ENCODE measurements at regions of chr9 and their contacts with region 1.

Region 1: DNA sequence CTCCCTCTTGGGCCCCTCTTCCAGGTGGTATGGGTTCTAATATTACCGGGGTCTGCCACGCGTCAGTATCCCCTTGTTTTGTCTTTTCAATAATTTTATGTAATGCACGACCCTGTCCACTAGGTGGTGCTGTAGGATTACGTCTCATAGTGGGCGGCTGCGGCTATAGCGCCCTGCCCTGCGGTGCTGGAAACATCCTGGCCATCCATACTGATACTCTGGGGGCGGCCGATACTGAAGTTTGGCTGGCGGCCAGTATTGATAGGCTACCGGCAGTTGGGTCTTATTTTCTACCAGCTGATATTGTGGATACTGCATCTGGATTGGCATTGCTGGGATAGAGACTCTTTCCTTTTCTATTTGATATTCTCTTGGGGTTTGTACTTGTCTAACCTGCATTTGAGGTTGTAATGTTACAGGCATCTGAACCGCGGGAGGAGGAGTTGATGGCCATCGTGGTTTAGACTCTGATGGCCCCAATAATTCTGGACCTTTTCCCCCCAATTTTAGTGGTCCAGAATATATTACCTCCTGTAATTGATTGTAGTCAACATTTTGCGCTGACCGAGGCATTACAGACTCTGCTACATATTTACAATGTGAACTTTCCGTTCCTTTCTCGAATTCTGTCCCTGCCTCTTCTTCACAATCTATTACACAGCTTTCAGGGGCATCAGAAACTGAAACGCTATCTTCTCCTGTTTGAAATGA is 3.3 kb upstream of the TMEM141 start:
- DNase-seq: peak in 3 of 4 donors; percentile 65 to 86 (median 77)
- ATAC-seq: no peak
- H3K4me3 ChIP-seq: no peak overlapping the region
- H3K27ac ChIP-seq: no peak overlapping the region
- H3K4me1 ChIP-seq: peaks cover 8 to 33% of the 10 kb centered on the region in 2 donors
- H3K27me3 ChIP-seq: no peaks in the 10 kb centered on the region
- CTCF ChIP-seq: peak; percentile 76 to 83

Region 2: DNA sequence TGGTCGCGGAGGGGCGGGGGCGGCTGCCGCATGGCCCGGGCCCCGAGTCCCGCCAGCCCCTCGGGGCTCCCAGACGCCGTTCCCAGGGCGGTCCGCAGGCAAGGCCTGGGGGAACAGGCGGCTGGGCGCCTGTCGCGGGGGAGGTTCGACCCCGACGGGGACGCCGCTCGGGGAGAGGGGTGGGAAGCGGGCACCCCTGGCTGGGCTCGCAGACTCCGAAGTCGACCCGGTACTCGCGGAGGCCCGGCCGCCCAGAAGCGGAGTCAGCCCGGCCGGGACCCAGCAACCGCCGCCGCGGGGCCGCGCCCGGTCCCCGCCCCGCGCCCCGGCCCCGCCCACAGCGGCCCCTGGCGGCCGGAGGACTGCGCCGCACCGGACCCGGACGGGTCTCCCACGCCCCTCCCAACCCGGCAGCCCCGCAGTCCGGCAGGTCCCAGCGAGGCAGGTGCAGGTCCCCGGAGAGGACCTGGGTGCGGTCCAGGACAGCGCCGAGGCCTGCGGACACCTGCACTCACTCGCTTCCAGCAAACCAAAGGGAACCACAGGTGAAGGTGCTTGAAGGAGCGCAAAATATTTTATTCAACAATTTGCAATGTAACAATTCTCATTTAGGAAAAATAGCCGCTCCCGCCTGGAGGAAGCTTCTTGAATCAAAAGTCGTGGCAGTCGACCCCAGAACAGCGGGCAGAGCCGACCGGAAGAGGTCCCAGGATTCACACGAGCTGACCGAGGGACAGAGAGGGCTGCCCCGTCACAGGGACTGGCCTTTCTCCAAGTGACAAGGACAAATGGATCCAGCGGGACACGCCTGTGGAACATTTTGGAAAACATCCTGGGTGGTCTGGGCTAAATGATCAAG is 348.1 kb before region 1 on chr9 and contains the start of gene INPP5E:
- intact Hi-C with region 1: no loop called
- DNase-seq: peak; percentile 64 to 96 (median 72)
- ATAC-seq: peak; percentile 91
- H3K4me3 ChIP-seq: peak within 1 kb of the TSS; percentile 91 to 92
- H3K27ac ChIP-seq: peak within 1 kb of the TSS in 1 of 2 donors; percentile 75
- H3K4me1 ChIP-seq: peaks cover 13 to 41% of the 10 kb centered on the region in 2 donors
- H3K27me3 ChIP-seq: peaks cover 0 to 11% of the 10 kb centered on the region in 2 donors
- CTCF ChIP-seq: peak; percentile 50 to 77
- polyA plus RNA-seq, gene INPP5E: 11.4 to 19.8 (median 14.3) TPM

Region 3: DNA sequence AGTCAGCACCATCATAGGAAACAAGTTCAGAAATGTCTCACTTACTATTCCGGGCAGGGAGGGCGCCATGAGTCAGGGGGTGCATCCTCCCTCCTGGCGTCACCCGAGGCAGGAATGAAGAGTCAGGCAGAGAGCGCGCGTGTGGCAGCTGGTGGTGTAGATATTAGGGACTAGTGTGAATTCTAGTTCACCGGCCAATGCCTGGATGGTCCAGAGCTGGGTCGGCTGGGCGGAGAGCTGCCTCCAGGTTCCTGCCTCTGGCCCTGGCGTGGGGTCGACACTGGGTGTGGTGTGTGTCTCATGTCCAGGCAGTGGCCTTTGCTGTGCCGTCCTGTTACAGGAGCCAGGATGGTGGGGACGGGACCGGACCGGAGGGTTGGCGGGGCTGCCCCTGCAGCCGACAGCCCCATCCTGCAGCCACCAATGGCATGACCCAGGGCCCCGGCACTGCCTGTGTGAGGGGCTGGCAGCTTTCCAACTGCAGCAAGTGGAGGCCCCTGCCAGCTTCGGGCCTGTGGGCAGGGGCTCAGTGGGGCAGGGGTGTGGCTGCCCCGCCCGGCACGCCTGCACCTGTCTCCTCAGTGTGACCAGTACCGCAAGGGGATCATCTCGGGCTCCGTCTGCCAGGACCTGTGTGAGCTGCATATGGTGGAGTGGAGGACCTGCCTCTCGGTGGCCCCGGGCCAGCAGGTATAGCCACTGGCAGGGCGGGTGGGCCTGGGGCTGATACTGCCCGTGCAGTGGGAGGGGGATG is 66.3 kb before region 1 on chr9:
- intact Hi-C with region 1: no loop called
- DNase-seq: peak in 1 of 4 donors; percentile 74
- ATAC-seq: no peak
- H3K4me3 ChIP-seq: no peak overlapping the region
- H3K27ac ChIP-seq: peak overlapping the region in 1 of 2 donors; percentile 64
- H3K4me1 ChIP-seq: peaks cover 17 to 82% of the 10 kb centered on the region in 2 donors
- H3K27me3 ChIP-seq: peaks cover 0 to 11% of the 10 kb centered on the region in 2 donors
- CTCF ChIP-seq: no peak

Region 4: GRCh38 chr9:137067860-137068538 is 280.2 kb after region 1 on chr9:
- intact Hi-C with region 1: loop called in 1 of 2 experiments (anchors 10 kb)
- DNase-seq: peak in 3 of 4 donors; percentile 81 to 92 (median 85)
- ATAC-seq: peak; percentile 62
- H3K4me3 ChIP-seq: no peak overlapping the region
- H3K27ac ChIP-seq: no peak overlapping the region
- H3K4me1 ChIP-seq: peaks cover 11 to 37% of the 10 kb centered on the region in 2 donors
- H3K27me3 ChIP-seq: peaks cover 0 to 21% of the 10 kb centered on the region in 2 donors
- CTCF ChIP-seq: peak; percentile 80 to 91

Measured in left lung (tissue), 14 donors.